ENCODE measurements at regions of chr13 and their contacts with region 1.

Region 1: GRCh38 chr13:26062844-26063444 is 11.1 kb upstream of the SHISA2 start:
- DNase-seq: peak; percentile 30
- H3K4me3 Mint-ChIP-seq: no peak overlapping the region
- H3K27ac Mint-ChIP-seq: no peak overlapping the region
- H3K4me1 Mint-ChIP-seq: peaks cover 10% of the 10 kb centered on the region
- H3K27me3 Mint-ChIP-seq: peaks cover 20% of the 10 kb centered on the region

Region 2: DNA sequence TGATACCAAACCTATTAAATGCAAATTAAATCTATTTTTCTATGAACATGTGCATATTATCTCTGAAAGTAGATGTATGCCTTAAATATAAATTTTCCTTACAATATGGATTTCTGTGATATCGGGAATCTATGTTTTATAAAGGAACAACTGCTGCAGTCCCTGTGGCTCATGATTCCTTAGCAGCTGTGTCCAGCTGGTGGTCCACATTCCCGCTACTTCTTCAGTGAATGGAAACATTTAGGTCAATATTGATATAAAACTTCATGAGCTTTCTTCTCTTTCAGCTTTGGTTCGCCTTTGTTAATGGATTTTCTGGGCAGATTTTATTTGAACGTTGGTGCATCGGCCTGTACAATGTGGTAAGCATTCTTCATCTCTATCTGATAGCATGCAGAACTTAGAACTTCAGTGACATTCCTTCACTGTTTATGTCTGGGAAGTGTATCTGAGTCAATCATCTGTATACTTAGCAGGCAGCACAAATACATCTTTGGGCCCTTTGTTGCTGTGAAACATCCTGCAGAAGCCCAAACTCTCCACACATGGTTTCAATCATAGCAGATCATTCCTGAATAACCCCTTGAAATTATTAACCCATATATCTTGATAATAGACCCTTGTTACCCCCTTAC is 235.0 kb before region 1 on chr13:
- CTCF ChIA-PET with region 1: interaction called, 15 read pairs
- POLR2A ChIA-PET with region 1: no interaction called
- DNase-seq: no peak
- H3K4me3 Mint-ChIP-seq: no peak overlapping the region
- H3K27ac Mint-ChIP-seq: no peak overlapping the region
- H3K4me1 Mint-ChIP-seq: no peaks in the 10 kb centered on the region
- H3K27me3 Mint-ChIP-seq: no peaks in the 10 kb centered on the region

Measured in activated CD4-positive, alpha-beta memory T cell treated with anti-CD3 and anti-CD28 coated beads, Interleukin-2, amount 10 ng/mL, durations not matched to agents 7 days and 5 days (primary cell).